Gastrocnemius medialis (tissue), 4 donors: ENCODE measurements at regions of chr7 and their contacts with region 1.

Region 1: DNA sequence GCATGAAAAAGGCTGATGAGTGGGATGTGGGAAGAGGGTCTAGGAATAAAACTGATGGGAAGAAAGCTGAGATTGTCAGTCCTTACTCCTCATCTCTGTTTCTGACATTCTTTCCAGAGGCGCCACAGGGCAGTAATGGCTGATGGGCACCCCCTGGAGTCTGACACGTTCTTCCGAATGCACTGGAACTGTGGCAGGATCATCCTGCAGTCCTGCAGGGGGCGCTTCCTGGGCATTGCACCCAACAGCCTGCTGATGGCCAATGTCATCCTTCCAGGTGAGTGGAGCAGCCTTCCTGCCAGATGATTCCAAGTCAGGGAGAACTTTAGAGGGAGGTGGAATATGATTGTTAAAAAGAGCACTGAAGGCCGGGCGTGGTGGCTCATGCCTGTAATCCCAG is 4.8 kb downstream of the FSCN3 start:
- DNase-seq: no peak
- ATAC-seq: no peak
- H3K4me3 ChIP-seq: no peak overlapping the region
- H3K27ac ChIP-seq: no peak overlapping the region
- H3K4me1 ChIP-seq: no peaks in the 10 kb centered on the region
- H3K27me3 ChIP-seq: no peaks in the 10 kb centered on the region
- CTCF ChIP-seq: no peak
- POLR2A ChIP-seq: no peak

Region 2: DNA sequence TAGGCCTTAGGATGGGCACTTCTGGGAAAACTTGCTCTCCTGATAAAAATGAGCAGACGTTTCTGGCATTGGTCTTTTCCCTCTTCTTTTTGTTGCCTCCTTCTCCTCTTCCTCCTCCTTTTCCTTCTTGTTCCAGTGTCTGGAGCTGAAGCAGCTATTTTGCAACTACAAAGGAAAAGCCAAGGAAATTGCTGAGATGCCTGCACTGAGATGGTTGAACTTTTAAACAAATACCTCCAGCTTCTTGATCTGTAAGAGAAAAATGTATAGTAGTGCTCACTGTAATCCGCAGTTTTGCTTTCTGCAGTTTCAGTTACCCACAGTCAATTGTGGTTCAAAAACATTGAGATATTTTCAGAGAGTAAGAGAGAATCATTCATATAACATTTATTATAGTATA is 46.2 kb after region 1 on chr7:
- in situ Hi-C with region 1: loop called in 1 of 4 experiments (anchors 10 kb)
- intact Hi-C with region 1: no loop called
- DNase-seq: no peak
- ATAC-seq: no peak
- H3K4me3 ChIP-seq: no peak overlapping the region
- H3K27ac ChIP-seq: no peak overlapping the region
- H3K4me1 ChIP-seq: no peaks in the 10 kb centered on the region
- H3K27me3 ChIP-seq: no peaks in the 10 kb centered on the region
- CTCF ChIP-seq: no peak
- POLR2A ChIP-seq: no peak